ENCODE measurements at regions of chr19 and their contacts with region 1.

Region 1: GRCh38 chr19:39080431-39080830 is 3.7 kb upstream of the ACP7 start:
- DNase-seq: no peak
- H3K4me3 ChIP-seq: no peak overlapping the region
- H3K27ac ChIP-seq: no peak overlapping the region
- H3K27me3 ChIP-seq: peaks cover 26% of the 10 kb centered on the region
- CTCF ChIP-seq: no peak

Region 2: DNA sequence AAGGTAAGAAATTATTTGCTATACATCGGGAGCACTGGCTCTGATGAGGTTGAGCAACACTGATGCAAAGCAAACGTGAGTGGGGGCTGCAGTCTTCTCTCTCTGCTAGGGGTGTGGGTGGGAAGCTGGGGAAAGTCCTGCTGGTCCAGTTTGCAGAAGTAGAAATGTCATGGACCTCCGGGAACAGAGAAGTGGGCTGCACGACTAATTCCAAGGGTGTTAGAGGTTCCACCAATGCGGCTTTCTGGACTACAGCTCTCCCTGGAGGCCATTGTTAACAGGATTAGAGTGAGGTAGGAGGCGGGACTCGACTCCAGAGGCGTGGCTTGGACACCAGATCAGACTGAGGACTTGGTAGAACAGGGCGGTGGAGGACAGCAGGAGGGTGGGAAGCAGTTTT is 42.3 kb before region 1 on chr19:
- CTCF ChIA-PET with region 1: no interaction called
- POLR2A ChIA-PET with region 1: no interaction called
- DNase-seq: no peak
- H3K4me3 ChIP-seq: no peak overlapping the region
- H3K27ac ChIP-seq: no peak overlapping the region
- H3K27me3 ChIP-seq: peaks cover 3% of the 10 kb centered on the region
- CTCF ChIP-seq: peak; percentile 30

Region 3: GRCh38 chr19:39064405-39064804 is 16.0 kb before region 1 on chr19:
- CTCF ChIA-PET with region 1: no interaction called
- POLR2A ChIA-PET with region 1: no interaction called
- DNase-seq: no peak
- H3K4me3 ChIP-seq: no peak overlapping the region
- H3K27ac ChIP-seq: no peak overlapping the region
- H3K27me3 ChIP-seq: peaks cover 2% of the 10 kb centered on the region
- CTCF ChIP-seq: no peak

Region 4: DNA sequence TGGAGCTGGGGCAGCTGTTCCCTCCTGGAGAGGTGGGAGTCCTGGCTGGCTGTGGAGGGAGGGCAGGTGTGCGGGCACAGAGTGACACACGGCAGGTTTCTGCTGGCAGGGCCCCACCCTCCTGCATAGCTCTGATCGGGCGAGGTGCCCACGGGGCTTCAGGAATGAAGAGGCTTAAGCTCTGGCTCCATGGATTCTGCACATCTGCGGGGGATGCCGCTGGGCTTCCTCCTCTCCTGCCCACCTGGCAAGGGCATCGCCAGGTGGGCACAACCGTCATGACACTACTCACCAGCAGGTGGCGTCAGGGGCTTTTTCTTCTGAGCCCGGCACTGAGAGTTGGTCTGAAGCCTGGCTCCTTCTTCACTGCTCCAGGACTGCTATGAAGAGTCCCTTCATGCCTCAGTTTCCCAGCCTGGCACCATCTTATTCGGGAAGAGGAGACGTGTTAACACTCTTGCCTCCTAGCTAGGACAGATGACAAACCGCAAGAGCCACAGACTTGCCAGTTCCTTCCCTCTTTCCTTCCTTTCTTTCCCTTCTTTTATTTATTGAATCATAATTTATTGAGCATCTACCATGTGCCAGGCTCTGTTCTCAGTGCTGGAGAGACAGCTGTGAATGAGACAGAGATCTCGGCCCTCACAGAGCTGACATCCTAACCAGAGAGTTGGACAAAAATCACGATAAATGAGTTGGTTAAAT is 30.0 kb after region 1 on chr19:
- CTCF ChIA-PET with region 1: interaction called, 18 read pairs
- POLR2A ChIA-PET with region 1: no interaction called
- DNase-seq: no peak
- H3K4me3 ChIP-seq: no peak overlapping the region
- H3K27ac ChIP-seq: no peak overlapping the region
- H3K27me3 ChIP-seq: peaks cover 20% of the 10 kb centered on the region
- CTCF ChIP-seq: peak; percentile 72

Measured in AG04450 (cell line).